ENCODE measurements at regions of chr5 and their contacts with region 1.

Region 1: DNA sequence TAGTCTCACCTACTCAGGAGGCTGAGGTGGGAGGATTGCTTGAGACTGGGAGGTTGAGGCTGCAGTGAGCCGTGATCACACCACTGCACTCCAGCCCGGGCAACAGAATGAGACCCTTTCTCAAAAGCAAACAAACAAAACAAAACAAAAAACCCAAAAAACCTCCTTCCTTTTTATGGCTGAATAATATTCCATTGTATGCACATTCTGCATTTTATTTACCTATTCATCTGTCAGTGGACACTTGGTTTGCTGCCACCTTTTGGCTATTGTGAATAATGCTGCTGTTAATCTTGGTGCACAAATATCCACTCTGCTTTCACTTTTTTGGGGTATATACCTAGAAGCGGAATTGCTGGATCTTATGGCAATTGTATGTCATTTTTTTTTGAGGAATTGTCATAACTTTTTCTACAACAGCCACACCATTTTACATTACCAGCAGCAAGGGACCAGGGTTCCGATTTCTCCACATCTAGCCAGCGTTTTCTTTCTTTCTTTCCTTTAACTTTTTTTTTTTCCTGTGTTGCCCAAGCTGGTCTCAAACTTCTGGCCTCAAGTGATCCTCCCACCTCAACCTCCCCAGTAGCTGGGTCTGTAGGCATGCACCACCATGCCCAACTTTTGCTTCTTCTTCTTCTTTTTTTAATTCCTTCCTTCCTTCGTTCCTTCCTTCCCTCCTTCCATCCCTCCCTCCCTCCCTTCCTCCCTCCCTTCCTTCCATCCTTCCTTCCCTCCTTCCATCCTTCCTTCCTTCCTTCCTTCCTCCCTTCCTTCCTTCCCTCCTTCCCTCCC is 30.6 kb downstream of the NKX2-5 start:
- DNase-seq: peak in 4 of 5 donors; percentile 24 to 34 (median 30)
- H3K4me3 ChIP-seq: no peak overlapping the region
- H3K4me3 Mint-ChIP-seq: no peak overlapping the region
- H3K27ac ChIP-seq: no peak overlapping the region
- H3K27ac Mint-ChIP-seq: peak overlapping the region in 1 of 7 donors; percentile 57
- H3K4me1 ChIP-seq: no peaks in the 10 kb centered on the region
- H3K4me1 Mint-ChIP-seq: peaks cover 0 to 5% (median 2%) of the 10 kb centered on the region in 4 donors
- H3K27me3 ChIP-seq: peaks cover 7% of the 10 kb centered on the region
- H3K27me3 Mint-ChIP-seq: peaks cover 25 to 48% of the 10 kb centered on the region in 2 donors

Region 2: GRCh38 chr5:172973127-172973916 is 231.1 kb before region 1 on chr5:
- CTCF ChIA-PET with region 1: interaction called, 12 read pairs
- POLR2A ChIA-PET with region 1: no interaction called
- intact Hi-C with region 1: loop called (anchors 1 kb)
- DNase-seq: no peak
- H3K4me3 ChIP-seq: no peak overlapping the region
- H3K4me3 Mint-ChIP-seq: no peak overlapping the region
- H3K27ac ChIP-seq: no peak overlapping the region
- H3K27ac Mint-ChIP-seq: no peak overlapping the region
- H3K4me1 ChIP-seq: no peaks in the 10 kb centered on the region
- H3K4me1 Mint-ChIP-seq: no peaks in the 10 kb centered on the region
- H3K27me3 ChIP-seq: no peaks in the 10 kb centered on the region
- H3K27me3 Mint-ChIP-seq: peaks cover 0 to 2% of the 10 kb centered on the region in 2 donors

Region 3: DNA sequence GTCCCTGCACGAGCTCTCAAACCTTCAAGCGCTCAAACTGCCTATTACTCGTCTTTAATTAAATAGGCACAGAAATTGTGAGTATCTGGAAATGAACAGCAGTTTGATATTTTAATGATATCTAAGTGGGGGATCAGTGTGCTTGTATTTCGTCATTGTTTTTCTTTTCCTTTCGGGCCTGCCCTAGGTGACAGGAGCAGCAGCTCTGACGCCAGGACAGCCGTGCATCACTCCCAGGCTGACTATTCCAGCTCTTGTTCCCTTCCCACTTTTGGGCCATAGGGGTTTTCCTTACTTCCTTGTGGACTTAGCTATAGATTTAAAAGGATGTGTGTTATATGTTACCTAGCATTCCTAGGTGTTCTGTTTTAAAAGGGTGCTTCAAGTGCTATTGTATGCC is 50.5 kb before region 1 on chr5:
- CTCF ChIA-PET with region 1: no interaction called
- POLR2A ChIA-PET with region 1: no interaction called
- intact Hi-C with region 1: no loop called
- DNase-seq: no peak
- H3K4me3 ChIP-seq: no peak overlapping the region
- H3K4me3 Mint-ChIP-seq: no peak overlapping the region
- H3K27ac ChIP-seq: no peak overlapping the region
- H3K27ac Mint-ChIP-seq: peak overlapping the region in 1 of 7 donors; percentile 53
- H3K4me1 ChIP-seq: no peaks in the 10 kb centered on the region
- H3K4me1 Mint-ChIP-seq: no peaks in the 10 kb centered on the region
- H3K27me3 ChIP-seq: no peaks in the 10 kb centered on the region
- H3K27me3 Mint-ChIP-seq: no peaks in the 10 kb centered on the region

Measured in CD4-positive, alpha-beta memory T cell (primary cell).